ENCODE measurements at regions of chr16 and their contacts with region 1.

Region 1: DNA sequence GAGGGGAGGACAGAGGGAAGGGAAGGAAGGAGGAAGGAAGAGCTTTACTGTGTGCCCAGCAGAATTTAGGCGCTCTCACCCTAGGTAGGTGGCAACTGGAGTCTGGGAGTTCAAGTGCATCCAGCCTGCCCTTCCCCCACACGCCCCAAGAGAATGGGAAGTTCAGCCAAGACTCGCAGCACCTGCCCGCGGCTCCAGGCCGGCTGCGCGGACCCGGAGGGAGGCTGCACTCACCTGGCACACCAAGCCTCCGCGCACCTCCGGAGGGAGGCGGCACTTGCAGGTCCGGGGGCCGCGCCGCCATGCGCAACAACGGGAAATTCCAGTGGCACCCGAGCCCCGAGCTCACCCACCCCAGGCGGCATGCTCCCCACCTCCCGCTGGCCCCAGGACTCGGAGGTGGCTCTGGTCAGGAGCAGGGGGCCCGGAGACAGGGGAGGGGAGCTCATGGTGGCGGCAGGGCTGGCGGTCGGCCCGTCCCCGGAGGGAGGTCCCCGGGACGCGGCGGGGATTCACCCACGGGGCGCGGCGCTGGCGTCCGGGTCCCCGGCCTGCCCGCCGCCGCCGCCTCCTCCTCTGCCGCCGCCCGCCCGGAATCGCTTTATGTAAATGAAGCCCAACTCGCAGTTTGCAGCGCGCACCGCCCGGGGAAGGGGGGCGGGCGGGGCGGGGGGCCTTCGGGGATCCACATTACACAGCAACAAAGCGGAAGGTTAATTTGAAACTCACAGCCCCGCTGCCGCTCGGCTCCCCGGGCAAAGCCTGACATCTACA is at the start of gene ZFHX3:
- DNase-seq: peak; percentile 76
- ATAC-seq: peak; percentile 46
- H3K4me3 ChIP-seq: peak within 1 kb of the TSS; percentile 88
- H3K27ac ChIP-seq: peak within 1 kb of the TSS; percentile 95
- H3K4me1 ChIP-seq: peaks cover 70% of the 10 kb centered on the region
- H3K27me3 ChIP-seq: no peaks in the 10 kb centered on the region
- CTCF ChIP-seq: no peak
- total RNA-seq, gene ZFHX3: 3.5 and 4.5 TPM in 2 replicates

Region 2: DNA sequence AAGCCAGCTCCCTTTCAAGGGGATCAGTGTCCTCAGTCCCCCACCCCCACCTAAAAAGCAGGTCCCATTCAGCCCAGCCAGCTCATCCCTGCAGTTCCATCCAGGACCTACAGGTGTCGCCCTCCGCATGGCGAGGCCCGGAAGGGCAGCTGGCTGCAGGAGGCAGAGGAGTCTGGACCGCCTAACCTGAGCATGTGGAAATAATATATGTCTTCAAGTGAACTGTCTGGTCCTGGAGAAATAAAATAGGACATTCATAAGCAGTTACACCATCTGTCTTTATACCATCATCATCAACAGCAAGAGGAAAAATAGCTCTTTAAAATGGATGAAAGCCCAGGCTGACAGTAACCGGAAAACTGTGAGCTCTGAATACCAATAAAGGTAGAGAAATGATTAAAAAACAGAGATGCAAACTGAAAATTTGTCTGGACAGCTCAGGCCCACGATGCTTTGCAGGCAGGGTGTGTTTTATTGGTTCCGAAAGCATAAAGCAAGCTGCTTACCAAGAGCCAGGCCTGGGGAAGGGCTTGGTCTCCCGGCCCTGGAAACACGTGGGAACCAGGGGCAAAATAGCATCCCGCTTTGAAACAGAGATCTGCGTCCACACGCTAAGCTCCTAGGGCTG is 215.0 kb before region 1 on chr16:
- CTCF ChIA-PET with region 1: no interaction called
- POLR2A ChIA-PET with region 1: interaction called, 27 read pairs
- intact Hi-C with region 1: loop called (anchors 2 kb)
- DNase-seq: peak; percentile 81
- ATAC-seq: peak; percentile 67
- H3K4me3 ChIP-seq: no peak overlapping the region
- H3K27ac ChIP-seq: no peak overlapping the region
- H3K4me1 ChIP-seq: peaks cover 5% of the 10 kb centered on the region; the same call in 1 of the 2 replicates
- H3K27me3 ChIP-seq: no peaks in the 10 kb centered on the region
- CTCF ChIP-seq: peak; percentile 92

Region 3: GRCh38 chr16:72989579-72990551 is 57.8 kb before region 1 on chr16:
- CTCF ChIA-PET with region 1: no interaction called
- POLR2A ChIA-PET with region 1: no interaction called
- intact Hi-C with region 1: loop called (anchors 1 kb)
- DNase-seq: peak; percentile 94
- ATAC-seq: peak; percentile 85
- H3K4me3 ChIP-seq: peak overlapping the region; percentile 61
- H3K27ac ChIP-seq: peak overlapping the region; percentile 99
- H3K4me1 ChIP-seq: peaks cover 51% of the 10 kb centered on the region
- H3K27me3 ChIP-seq: no peaks in the 10 kb centered on the region
- CTCF ChIP-seq: no peak

Region 4: DNA sequence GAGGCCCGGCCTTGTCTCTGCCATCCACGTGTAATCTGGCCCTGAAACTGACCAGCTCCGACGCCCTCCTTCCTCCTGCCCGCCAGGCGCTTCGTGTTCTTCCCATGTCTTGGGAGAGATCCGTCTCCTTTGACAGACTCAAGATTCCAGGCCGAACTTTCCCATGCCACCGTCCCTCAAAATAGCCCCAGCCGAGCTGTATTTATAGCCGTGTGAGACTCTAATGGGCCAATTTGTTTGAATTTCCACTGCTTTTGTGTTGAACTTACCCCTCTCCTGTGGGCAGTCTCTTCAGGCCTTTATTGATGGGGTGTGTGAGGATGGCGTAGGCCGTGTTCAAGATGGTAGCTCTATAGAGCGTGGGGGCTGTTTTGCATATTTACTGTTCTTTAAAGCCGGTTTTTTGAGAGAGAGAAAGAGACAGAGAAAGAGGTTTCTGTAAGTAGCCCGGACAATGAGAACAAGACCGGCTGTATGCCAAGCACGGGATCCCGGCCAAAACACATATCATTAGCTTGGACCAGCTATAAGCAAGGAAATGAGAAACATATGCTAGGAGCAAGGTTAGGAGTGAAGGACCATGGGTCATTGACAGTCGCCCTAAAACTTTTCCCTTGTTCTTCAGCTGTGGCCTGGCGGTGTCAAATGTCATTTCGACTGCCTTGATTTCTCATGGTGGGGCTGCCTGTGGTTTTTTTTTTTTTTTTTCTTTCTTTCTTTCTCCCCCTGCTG is 124.7 kb after region 1 on chr16:
- CTCF ChIA-PET with region 1: no interaction called
- POLR2A ChIA-PET with region 1: no interaction called
- intact Hi-C with region 1: loop called (anchors 5 kb)
- DNase-seq: peak; percentile 65
- ATAC-seq: peak; percentile 66
- H3K4me3 ChIP-seq: no peak overlapping the region
- H3K27ac ChIP-seq: no peak overlapping the region
- H3K4me1 ChIP-seq: peaks cover 13% of the 10 kb centered on the region
- H3K27me3 ChIP-seq: no peaks in the 10 kb centered on the region
- CTCF ChIP-seq: no peak; the same call in 1 of the 2 replicates